Transverse colon (tissue), 4 donors: ENCODE measurements at regions of chr9 and their contacts with region 1.

Region 1: DNA sequence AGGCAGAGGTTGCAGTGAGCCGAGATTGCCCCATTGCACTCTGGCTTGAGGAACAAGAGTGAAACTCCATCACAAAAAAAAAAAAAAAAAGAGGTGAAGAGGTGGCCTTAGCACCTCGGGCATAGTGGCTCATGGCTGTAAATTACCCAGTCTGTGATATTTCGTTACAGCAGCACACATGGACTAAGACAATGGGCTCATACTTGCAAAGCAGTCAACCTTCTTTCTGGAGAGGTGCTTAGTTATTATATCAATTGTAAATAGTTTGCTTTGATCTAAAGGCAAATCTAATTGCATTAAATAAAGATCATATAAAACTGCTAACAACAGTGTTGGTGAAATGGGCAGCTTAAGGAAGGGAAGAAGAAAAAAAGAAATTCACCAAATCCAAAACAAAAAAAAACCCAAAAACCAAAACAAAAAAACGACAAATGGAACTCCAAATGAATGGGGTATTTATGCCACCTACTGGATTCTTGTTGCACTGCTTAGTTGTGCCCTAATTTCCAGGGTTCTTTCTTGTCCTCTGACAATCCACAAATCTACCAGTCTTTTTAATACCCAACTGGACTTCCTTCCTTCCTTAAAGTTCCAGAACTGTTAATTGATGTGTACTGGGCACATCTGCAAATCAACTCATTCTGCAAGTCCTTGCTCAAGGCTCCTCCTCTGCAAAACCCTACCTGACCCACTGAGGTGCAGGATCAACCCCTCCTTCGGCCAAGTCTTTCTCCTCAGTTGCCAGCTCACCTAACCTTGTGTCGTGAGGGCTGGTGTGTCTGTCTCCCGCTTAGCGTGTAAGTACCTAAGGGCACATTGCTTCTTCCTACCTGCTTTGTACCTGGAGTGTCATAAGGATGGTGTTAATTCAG is 35.0 kb upstream of the DMRT1 start:
- DNase-seq: no peak
- H3K4me3 ChIP-seq: no peak overlapping the region
- H3K27ac ChIP-seq: no peak overlapping the region
- H3K4me1 ChIP-seq: no peaks in the 10 kb centered on the region
- H3K27me3 ChIP-seq: no peaks in the 10 kb centered on the region
- CTCF ChIP-seq: peak; percentile 54 to 64 (median 56)
- EP300 ChIP-seq: no peak
- POLR2A ChIP-seq: no peak

Region 2: DNA sequence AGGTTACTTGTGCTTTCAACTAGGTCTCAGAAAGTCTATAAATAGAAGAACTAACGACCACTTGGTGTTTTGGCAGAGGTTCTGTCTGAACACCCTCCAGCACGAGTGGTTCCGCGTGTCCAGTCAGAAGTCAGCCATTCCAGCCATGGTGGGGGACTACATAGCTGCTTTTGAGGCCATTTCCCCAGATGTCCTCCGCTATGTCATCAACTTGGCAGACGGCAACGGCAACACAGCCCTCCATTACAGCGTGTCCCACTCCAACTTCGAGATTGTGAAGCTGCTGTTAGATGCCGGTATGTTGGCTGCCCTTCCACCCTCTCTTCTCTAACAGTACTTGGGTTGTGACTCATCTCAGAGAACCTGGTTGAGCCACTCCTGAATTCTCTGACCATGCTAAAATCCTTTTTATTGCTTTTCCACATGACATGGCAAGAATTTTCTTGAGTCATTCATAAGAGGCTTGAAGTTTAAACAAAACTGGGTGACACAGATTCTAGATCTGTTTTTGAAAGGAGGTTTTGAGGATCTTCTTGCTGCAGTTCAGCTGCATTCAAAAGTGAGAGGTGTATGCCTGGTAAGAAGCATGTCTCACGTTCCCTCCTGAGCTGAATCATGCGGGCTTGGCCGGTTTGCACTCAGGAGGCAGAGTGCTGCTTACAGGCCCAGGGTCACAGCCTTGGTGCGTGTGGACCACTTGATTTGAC is 68.2 kb before region 1 on chr9:
- in situ Hi-C with region 1: no loop called
- intact Hi-C with region 1: no loop called
- DNase-seq: peak; percentile 41
- H3K4me3 ChIP-seq: no peak overlapping the region
- H3K27ac ChIP-seq: peak overlapping the region; percentile 75 to 84 (median 82)
- H3K4me1 ChIP-seq: peaks cover 7 to 28% (median 14%) of the 10 kb centered on the region in 4 donors
- H3K27me3 ChIP-seq: no peaks in the 10 kb centered on the region
- CTCF ChIP-seq: no peak
- EP300 ChIP-seq: no peak
- POLR2A ChIP-seq: no peak

Region 3: DNA sequence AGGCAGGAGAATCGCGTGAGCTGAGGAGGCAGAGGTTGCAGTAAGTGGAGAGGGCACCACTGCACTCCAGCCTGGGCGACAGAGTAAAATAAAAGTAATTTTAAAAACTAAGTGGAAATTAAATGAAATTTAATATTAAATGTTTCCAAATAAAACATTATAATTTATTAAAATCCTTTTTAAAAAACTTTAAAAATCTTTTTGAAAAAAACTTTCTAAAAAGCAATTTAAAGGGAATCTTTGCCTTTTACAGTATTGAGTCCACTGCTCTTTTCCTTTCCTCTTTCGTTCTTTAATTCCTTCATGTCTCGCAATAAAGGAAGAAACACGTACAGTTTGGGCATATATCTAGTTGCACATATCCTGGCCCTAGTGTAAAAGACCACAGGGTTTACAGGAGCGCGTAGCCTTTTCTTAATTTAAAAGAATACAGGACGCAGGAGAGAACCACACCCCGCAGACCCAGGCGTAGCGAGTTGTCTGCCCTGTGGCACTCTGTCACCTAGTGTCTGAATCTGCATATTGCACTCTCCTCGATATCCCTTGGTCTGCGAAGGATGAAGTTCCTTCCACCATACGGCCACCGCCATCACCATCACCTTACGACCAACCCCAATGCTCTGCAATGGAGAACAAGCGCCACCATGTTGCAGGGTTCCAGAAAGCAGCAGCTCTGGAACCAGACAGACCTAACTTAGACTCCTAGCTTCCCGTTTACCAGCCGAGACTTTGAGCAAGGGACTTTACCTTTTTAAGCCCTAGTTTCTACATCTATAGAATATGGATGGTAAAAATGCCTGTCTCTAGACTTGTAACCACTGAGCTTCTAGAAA is 42.6 kb before region 1 on chr9:
- in situ Hi-C with region 1: no loop called
- intact Hi-C with region 1: loop called (anchors 5 kb)
- DNase-seq: peak; percentile 76
- H3K4me3 ChIP-seq: no peak overlapping the region
- H3K27ac ChIP-seq: peak overlapping the region in 1 of 4 donors; percentile 29
- H3K4me1 ChIP-seq: peaks cover 0 to 6% (median 2%) of the 10 kb centered on the region in 4 donors
- H3K27me3 ChIP-seq: peaks cover 17% of the 10 kb centered on the region
- CTCF ChIP-seq: peak; percentile 89 to 96 (median 94)
- EP300 ChIP-seq: no peak
- POLR2A ChIP-seq: no peak